Heart left ventricle (tissue), 16 donors: ENCODE measurements at regions of chr3 and their contacts with region 1.

Region 1: DNA sequence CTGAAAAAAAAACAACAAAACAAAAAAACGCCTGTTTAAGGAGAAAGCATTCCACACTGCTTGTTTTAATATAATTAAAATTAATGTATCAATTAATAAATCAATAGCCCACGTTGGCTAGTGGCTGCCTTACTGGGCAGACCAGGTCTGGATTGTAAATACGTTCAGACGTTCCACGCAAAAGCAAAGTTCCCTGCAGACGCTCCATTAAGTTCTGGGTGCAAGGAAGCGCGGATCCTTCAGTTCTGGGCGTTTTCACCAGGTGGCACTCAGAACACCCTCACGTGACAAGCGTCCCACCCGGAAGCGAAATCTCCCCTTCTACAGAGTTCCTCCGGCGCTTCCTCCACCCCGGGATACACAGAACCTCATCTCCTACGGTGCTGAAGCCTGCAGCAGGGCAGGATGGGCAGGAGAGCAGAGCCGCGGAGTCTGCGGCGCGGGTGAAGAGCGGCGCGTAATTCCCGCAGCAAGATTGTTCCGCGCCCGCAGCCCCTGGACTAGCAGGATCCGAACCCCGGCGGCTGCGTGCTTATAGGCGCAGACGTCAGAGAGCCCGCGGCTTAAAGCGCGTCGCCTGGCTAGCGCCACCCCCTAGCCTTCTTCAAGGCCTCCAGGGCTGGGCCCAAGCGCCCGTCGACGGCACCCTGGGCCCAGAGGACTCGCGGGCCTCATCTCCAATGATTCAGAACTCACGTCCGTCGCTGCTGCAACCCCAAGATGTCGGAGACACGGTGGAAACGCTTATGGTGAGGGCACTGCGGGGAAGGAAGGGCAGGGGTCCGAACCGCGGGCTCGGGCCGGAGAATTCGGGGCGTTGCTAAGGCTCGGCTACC is at the start of gene SLC25A38:
- DNase-seq: peak; percentile 69 to 85 (median 80)
- ATAC-seq: peak; percentile 62 to 83 (median 79)
- H3K4me3 ChIP-seq: peak within 1 kb of the TSS; percentile 67 to 96 (median 80)
- H3K27ac ChIP-seq: peak within 1 kb of the TSS; percentile 51 to 97 (median 90)
- H3K4me1 ChIP-seq: peaks cover 0 to 43% (median 21%) of the 10 kb centered on the region in 12 donors
- H3K27me3 ChIP-seq: no peaks in the 10 kb centered on the region
- CTCF ChIP-seq: peak in 7 of 12 donors; percentile 8 to 53 (median 26)
- POLR2A ChIP-seq: no peak
- total RNA-seq, gene SLC25A38: 13.6 to 30.6 (median 20.9) TPM

Region 2: GRCh38 chr3:39406368-39407258 is 23.4 kb after region 1 on chr3 and contains the start of gene RPSA:
- intact Hi-C with region 1: loop called in 1 of 10 experiments (anchors 2 kb)
- DNase-seq: peak; percentile 92 to 98 (median 95)
- ATAC-seq: peak; percentile 92 to 99 (median 96)
- H3K4me3 ChIP-seq: peak within 1 kb of the TSS; percentile 64 to 95 (median 76)
- H3K27ac ChIP-seq: peak within 1 kb of the TSS; percentile 43 to 91 (median 86)
- H3K4me1 ChIP-seq: peaks cover 4 to 40% (median 23%) of the 10 kb centered on the region in 12 donors
- H3K27me3 ChIP-seq: no peaks in the 10 kb centered on the region
- CTCF ChIP-seq: peak in 9 of 12 donors; percentile 13 to 57 (median 32)
- POLR2A ChIP-seq: peak; percentile 74 to 93
- total RNA-seq, gene RPSA: 308 to 700 (median 426) TPM

Region 3: GRCh38 chr3:40355410-40355809 is 972.1 kb after region 1 on chr3:
- intact Hi-C with region 1: no loop called
- DNase-seq: no peak
- ATAC-seq: no peak
- H3K4me3 ChIP-seq: no peak overlapping the region
- H3K27ac ChIP-seq: no peak overlapping the region
- H3K4me1 ChIP-seq: no peaks in the 10 kb centered on the region
- H3K27me3 ChIP-seq: no peaks in the 10 kb centered on the region
- CTCF ChIP-seq: no peak
- POLR2A ChIP-seq: no peak

Region 4: GRCh38 chr3:40623567-40623966 is 1240.3 kb after region 1 on chr3:
- intact Hi-C with region 1: no loop called
- DNase-seq: peak in 3 of 5 donors; percentile 19 to 48 (median 44)
- ATAC-seq: peak; percentile 36 to 93 (median 72)
- H3K4me3 ChIP-seq: no peak overlapping the region
- H3K27ac ChIP-seq: no peak overlapping the region
- H3K4me1 ChIP-seq: peaks cover 0 to 6% (median 0%) of the 10 kb centered on the region in 12 donors
- H3K27me3 ChIP-seq: no peaks in the 10 kb centered on the region
- CTCF ChIP-seq: no peak
- POLR2A ChIP-seq: no peak